A673 (cell line): ENCODE measurements at regions of chr13 and their contacts with region 1.

Region 1: DNA sequence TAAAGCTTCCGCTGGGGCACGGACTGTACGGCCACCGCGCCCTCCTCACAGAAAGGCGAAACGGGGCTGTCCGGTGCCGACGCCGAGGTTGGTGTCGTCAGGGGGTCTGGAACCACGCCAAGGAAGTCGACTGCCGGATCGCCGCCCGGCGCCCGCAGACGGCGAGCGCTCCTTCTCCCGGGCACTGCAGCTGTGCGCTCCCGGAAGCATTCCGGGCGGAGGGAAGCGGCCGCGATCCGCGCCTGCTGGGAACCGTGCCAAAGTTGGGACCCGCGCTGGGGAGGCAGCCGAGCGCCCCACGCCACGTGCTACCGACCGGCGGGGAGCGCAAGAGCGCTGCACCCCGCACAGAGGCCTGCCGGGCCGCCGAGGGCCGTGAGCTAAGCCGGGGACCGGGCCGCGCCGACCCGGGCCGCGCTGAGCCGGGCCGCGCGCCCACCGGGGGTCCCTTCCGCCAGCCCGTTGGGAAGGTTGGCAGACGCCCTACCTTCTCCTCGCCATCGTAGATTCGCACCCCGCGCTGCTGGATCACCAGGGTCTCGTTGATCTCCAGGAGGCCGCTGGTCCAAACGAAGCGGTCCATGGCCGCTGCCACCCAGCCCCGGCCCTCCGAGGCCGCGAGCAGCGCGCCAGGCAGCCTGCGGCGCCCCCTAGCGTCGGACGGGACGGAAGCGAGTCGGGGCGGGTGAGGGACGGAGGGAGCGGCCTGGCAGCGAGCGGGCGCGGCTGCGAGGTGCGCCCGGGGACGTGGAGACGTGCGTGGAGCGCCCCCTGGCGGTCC is at the start of gene VPS36:
- DNase-seq: peak; percentile 97
- H3K4me3 ChIP-seq: peak within 1 kb of the TSS; percentile 97
- H3K27ac ChIP-seq: peak within 1 kb of the TSS; percentile 99
- H3K4me1 ChIP-seq: peaks cover 22% of the 10 kb centered on the region
- H3K27me3 ChIP-seq: no peaks in the 10 kb centered on the region
- CTCF ChIP-seq: peak; percentile 92
- total RNA-seq, gene VPS36: 48.4 and 52.9 TPM in 2 replicates

Region 2: DNA sequence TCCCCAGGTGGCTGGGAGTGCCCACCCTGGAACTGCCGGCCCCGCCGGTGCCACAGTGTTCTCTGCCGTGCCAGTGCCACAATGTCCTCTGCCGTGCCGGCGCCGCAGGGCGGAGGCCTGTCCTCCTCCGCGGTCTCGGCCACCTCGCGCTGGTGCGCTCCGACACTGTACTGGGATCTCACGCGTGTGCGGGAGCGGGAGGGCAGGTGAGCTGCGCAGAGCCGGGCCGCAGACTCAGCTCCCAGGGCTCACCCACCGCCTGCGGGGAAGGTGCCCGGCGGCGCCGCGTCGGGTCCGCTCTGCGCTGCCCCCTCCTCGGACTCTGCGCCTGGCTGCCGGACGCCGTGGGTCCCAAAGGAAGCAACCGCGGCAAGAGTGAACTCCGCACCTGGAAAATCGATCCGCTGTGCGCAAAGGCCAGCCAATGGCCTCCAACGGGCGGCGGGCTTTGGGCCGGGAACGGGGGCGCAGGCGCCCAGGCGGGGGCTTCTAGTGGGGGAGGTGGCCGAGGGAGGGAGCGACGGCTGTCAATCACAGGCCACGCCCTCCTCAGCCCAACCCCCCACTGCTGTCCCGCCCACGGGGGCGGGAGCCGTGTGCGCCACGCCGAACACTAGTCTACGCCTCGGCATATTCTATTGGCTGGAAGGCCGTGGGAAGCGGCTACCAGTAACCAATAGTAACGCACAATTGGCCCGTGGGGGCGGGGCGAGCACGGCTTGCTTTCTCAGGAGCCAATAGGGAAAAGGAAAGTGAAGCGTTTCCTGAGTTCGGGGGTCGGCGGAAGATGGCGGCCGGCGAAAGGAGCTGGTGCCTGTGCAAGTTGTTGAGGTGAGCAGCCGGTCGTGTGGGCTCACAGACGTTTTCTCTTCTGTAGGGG is 438.3 kb before region 1 on chr13 and contains the start of gene ALG11:
- CTCF ChIA-PET with region 1: no interaction called
- POLR2A ChIA-PET with region 1: no interaction called
- intact Hi-C with region 1: loop called (anchors 10 kb)
- DNase-seq: peak; percentile 99
- H3K4me3 ChIP-seq: peak within 1 kb of the TSS; percentile 98
- H3K27ac ChIP-seq: peak within 1 kb of the TSS; percentile 79
- H3K4me1 ChIP-seq: peaks cover 10% of the 10 kb centered on the region
- H3K27me3 ChIP-seq: peaks cover 22% of the 10 kb centered on the region
- CTCF ChIP-seq: no peak
- total RNA-seq, gene ALG11: 30.6 and 30.9 TPM in 2 replicates

Region 3: DNA sequence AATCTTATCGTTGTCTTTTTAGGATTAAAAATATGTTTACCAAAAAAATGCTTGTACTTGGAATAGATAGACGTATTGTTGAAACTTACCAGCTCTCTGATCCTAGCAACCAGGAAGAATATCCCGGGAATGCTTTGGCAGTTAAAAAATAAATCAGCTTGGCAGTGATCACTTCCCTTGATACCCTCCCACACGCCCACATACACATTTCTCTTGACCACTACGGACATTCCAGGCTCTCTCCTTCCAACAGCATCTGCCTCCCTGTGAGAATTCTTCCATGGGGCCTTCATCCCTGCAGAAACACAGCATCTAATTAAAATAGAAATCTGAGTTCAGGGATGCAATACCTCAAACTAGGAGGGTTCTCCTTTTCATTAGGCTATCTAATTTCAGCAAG is 102.1 kb before region 1 on chr13:
- CTCF ChIA-PET with region 1: interaction called, 10 read pairs
- POLR2A ChIA-PET with region 1: no interaction called
- intact Hi-C with region 1: loop called (anchors 1 kb)
- DNase-seq: no peak
- H3K4me3 ChIP-seq: no peak overlapping the region
- H3K27ac ChIP-seq: no peak overlapping the region
- H3K4me1 ChIP-seq: no peaks in the 10 kb centered on the region
- H3K27me3 ChIP-seq: no peaks in the 10 kb centered on the region
- CTCF ChIP-seq: no peak